Ascending aorta (tissue), 2 donors: ENCODE measurements at regions of chr18 and their contacts with region 1.

Region 1: GRCh38 chr18:44679056-44679905 is 1.4 kb upstream of the SETBP1 start:
- DNase-seq: peak; percentile 63 to 90
- H3K4me3 ChIP-seq: peak overlapping the region; percentile 83 to 94
- H3K27ac ChIP-seq: peak overlapping the region; percentile 97 to 98
- H3K4me1 ChIP-seq: peaks cover 0 to 17% of the 10 kb centered on the region in 2 donors
- H3K27me3 ChIP-seq: no peaks in the 10 kb centered on the region
- CTCF ChIP-seq: peak; percentile 62 to 81 (median 68)

Region 2: DNA sequence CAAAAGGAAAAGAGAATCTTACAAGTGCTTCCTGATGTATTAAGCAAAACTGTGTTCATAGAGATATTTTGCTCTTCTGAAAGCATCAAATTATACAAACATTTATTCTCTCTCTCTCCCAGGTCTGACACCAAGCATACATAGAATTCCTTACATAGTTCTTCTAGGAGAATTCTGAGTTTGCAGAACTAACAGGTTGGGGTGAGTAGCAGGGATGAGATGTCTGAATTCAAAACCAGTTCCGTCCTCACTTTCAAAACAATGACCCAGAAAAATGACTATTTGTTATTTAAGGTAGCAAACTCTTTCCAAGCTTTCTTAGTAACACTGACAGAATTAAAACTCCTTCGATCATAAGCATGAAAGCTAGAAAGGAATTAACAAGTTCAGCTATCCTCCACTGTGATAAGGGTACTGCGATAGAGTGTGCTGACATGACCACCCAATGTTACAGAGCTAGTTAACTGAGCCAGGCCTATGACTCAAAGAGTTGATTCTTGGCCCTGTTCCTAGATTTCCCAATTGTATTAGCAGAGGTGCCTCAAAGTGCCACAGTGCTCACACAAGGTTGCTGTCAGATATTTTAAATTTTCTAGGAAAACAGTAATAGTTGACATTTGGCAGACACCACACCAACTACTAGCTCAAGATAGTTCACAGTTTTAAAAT is 84.3 kb before region 1 on chr18:
- intact Hi-C with region 1: loop called (anchors 5 kb)
- DNase-seq: no peak
- H3K4me3 ChIP-seq: no peak overlapping the region
- H3K27ac ChIP-seq: peak overlapping the region in 1 of 2 donors; percentile 52
- H3K4me1 ChIP-seq: peaks cover 4 to 59% of the 10 kb centered on the region in 2 donors
- H3K27me3 ChIP-seq: no peaks in the 10 kb centered on the region
- CTCF ChIP-seq: no peak

Region 3: GRCh38 chr18:44789710-44790109 is 110.4 kb after region 1 on chr18:
- intact Hi-C with region 1: loop called (anchors 5 kb)
- DNase-seq: no peak
- H3K4me3 ChIP-seq: no peak overlapping the region
- H3K27ac ChIP-seq: peak overlapping the region; percentile 23 to 26
- H3K4me1 ChIP-seq: peaks cover 12 to 38% of the 10 kb centered on the region in 2 donors
- H3K27me3 ChIP-seq: no peaks in the 10 kb centered on the region
- CTCF ChIP-seq: no peak

Region 4: GRCh38 chr18:44895176-44895798 is 216.0 kb after region 1 on chr18:
- intact Hi-C with region 1: loop called (anchors 10 kb)
- DNase-seq: no peak
- H3K4me3 ChIP-seq: no peak overlapping the region
- H3K27ac ChIP-seq: no peak overlapping the region
- H3K4me1 ChIP-seq: peaks cover 0 to 2% of the 10 kb centered on the region in 2 donors
- H3K27me3 ChIP-seq: no peaks in the 10 kb centered on the region
- CTCF ChIP-seq: peak in 1 of 3 experiments; percentile 17

Region 5: GRCh38 chr18:45212181-45213039 is 533.1 kb after region 1 on chr18:
- intact Hi-C with region 1: loop called (anchors 2 kb)
- DNase-seq: peak in 1 of 2 donors; percentile 86
- H3K4me3 ChIP-seq: no peak overlapping the region
- H3K27ac ChIP-seq: no peak overlapping the region
- H3K4me1 ChIP-seq: no peaks in the 10 kb centered on the region
- H3K27me3 ChIP-seq: no peaks in the 10 kb centered on the region
- CTCF ChIP-seq: peak; percentile 69 to 81 (median 74)

Region 6: DNA sequence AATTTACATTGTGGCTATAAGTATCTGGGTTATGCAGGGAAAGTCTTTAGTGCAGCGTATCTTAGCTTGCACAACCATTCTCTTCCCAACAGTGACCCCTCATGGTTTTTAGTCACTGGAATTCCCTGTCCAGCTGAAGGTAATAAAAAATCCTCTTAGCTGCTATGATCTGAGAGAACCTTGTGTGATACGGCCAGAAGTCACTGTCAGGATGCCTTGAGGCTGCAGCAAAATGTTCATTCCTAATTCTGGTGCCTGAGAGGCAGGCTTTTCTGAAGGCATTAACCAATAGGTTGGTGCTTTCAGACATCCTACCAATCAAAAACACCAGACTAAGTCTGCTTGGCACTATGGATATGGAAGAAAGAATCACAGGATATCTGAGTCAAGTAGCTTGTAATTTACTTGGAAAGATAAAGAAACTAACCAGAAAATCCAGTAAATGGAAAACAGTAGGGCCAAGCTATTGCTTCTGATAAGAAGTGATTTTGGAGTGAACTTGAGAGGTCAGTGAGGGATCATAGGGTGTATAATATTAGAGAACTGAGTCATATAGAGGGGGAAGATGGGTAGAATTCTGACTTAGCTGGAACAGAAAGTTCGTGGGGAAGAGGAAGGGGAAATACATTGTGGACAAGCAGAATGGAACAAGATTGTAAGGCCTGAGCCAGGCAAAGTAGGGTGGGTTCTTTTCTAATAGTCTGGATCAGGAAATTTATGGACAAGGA is 847.0 kb after region 1 on chr18:
- intact Hi-C with region 1: loop called (anchors 5 kb)
- DNase-seq: no peak
- H3K4me3 ChIP-seq: no peak overlapping the region
- H3K27ac ChIP-seq: peak overlapping the region; percentile 16 to 53
- H3K4me1 ChIP-seq: peaks cover 10 to 28% of the 10 kb centered on the region in 2 donors
- H3K27me3 ChIP-seq: no peaks in the 10 kb centered on the region
- CTCF ChIP-seq: peak in 1 of 3 experiments; percentile 36